Naive thymus-derived CD4-positive, alpha-beta T cell (primary cell): ENCODE measurements at regions of chr5 and their contacts with region 1.

Region 1: DNA sequence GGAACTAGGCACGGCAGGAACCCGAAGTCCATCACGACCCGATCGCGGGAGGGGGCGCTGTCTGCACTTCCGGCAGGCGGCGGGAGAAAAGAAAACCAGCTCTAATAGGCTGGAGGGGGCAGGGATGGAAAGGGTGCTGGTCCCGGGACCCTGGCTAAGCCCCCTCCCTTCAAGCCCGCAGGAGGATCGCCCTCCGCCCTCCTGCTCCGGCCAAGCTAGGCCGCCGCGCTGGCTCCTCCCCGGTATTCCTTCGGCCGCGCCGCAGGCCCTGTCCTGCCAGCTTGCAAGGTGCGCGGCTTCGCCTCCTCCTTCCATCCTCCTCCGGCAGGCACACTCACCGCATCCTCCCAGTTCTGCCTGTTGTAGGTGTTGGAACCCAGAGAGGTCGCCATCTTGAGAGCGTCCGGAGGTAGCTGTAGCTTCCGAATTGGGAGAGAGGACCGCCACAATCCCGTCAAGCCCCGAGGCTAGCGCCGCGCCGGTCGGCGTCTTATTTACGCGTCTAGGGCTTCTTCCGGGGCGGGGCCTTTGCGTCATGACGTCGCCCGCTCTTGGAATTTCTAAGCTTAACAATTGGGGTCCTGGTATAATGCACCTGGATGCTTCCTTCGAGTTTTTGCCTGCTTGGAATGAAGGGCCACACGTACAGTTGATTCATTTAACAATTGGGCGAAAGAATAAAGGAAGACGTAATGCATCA is at the start of gene RBM22:
- DNase-seq: peak; percentile 77 to 93 (median 92)
- ATAC-seq: peak; percentile 96
- H3K4me3 ChIP-seq: peak within 1 kb of the TSS; percentile 80
- H3K4me3 Mint-ChIP-seq: no peak within 1 kb of the TSS
- H3K27ac ChIP-seq: peak within 1 kb of the TSS; percentile 96
- H3K27ac Mint-ChIP-seq: no peak within 1 kb of the TSS
- H3K4me1 ChIP-seq: peaks cover 13 to 14% of the 10 kb centered on the region in 2 donors
- H3K4me1 Mint-ChIP-seq: peaks cover 0 to 12% (median 7%) of the 10 kb centered on the region in 7 donors
- H3K27me3 ChIP-seq: no peaks in the 10 kb centered on the region
- H3K27me3 Mint-ChIP-seq: peaks cover 0 to 3% (median 0%) of the 10 kb centered on the region in 5 donors
- total RNA-seq, gene RBM22: 74.2 to 103 (median 93.1) TPM

Region 2: GRCh38 chr5:150000256-150000989 is 700.3 kb before region 1 on chr5 and contains the starts of genes HMGXB3 and TIGD6:
- CTCF ChIA-PET with region 1: no interaction called
- POLR2A ChIA-PET with region 1: no interaction called
- intact Hi-C with region 1: loop called in 1 of 2 experiments (anchors 5 kb)
- DNase-seq: peak; percentile 64 to 87 (median 74)
- ATAC-seq: peak; percentile 83
- H3K4me3 ChIP-seq: peak within 1 kb of the TSS; percentile 76
- H3K4me3 Mint-ChIP-seq: peak within 1 kb of the TSS; percentile 86 to 99 (median 93)
- H3K27ac ChIP-seq: peak within 1 kb of the TSS; percentile 80
- H3K27ac Mint-ChIP-seq: peak within 1 kb of the TSS; percentile 75 to 98 (median 94)
- H3K4me1 ChIP-seq: peaks cover 18 to 23% of the 10 kb centered on the region in 2 donors
- H3K4me1 Mint-ChIP-seq: peaks cover 33 to 55% (median 46%) of the 10 kb centered on the region in 7 donors
- H3K27me3 ChIP-seq: no peaks in the 10 kb centered on the region
- H3K27me3 Mint-ChIP-seq: no peaks in the 10 kb centered on the region
- total RNA-seq, gene HMGXB3: 27.2 to 40.6 (median 34.5) TPM
- total RNA-seq, gene TIGD6: 2.3 to 7.4 (median 2.8) TPM

Region 3: DNA sequence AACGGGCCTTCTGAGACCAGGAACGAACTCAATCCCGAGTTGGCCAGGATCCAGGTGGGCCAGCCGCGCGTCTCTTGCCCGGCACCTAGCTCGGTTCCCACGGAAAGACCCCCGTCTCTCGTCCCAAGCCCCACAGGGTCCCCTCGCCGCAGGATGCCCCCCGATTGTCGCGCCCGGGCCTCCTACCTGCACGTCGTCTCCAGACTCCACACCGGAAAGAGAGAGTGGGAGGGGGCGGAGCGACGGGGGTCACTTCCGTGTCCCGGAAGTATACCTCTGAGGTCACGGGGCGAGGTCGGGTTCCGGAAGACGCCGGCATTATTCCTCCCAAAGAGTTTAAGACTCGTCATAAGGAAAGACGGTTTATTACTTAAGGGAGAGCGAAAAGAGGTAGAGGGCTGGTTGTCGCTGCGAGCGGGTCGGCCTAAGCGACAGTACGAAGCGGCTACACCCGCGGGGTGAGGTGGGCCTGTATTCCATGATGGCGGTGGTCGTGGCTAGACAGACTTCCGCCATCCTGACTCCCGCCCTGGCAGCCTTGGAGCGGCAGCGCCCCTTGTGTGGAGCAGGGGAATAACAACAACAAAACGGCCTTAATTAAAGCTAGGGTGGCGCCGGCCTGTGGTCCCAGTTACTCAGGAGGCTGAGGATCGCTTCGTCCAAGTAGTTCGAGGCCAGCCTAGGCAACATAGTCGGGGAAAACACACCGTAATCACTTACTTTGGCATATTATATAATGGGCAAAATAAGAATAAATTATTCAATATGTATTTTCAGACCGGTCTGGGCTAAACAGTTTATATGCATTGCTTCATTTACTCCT is 251.0 kb before region 1 on chr5 and contains the start of gene RPS14:
- CTCF ChIA-PET with region 1: interaction called, 4 read pairs
- POLR2A ChIA-PET with region 1: interaction called, 18 read pairs
- intact Hi-C with region 1: loop called (anchors 1 kb)
- DNase-seq: peak; percentile 89 to 98 (median 97)
- ATAC-seq: peak; percentile 97
- H3K4me3 ChIP-seq: peak within 1 kb of the TSS; percentile 68
- H3K4me3 Mint-ChIP-seq: peak within 1 kb of the TSS; percentile 89 to 100 (median 96)
- H3K27ac ChIP-seq: peak within 1 kb of the TSS; percentile 100
- H3K27ac Mint-ChIP-seq: peak within 1 kb of the TSS; percentile 97 to 100 (median 100)
- H3K4me1 ChIP-seq: peaks cover 18 to 23% of the 10 kb centered on the region in 2 donors
- H3K4me1 Mint-ChIP-seq: peaks cover 21 to 44% (median 37%) of the 10 kb centered on the region in 7 donors
- H3K27me3 ChIP-seq: no peaks in the 10 kb centered on the region
- H3K27me3 Mint-ChIP-seq: no peaks in the 10 kb centered on the region
- total RNA-seq, gene RPS14: 2,331 to 7,378 (median 6,414) TPM

Region 4: GRCh38 chr5:150656191-150657132 is 44.3 kb before region 1 on chr5:
- CTCF ChIA-PET with region 1: interaction called, 3 read pairs
- POLR2A ChIA-PET with region 1: interaction called, 5 read pairs
- intact Hi-C with region 1: loop called (anchors 1 to 2 kb)
- DNase-seq: peak; percentile 74 to 88 (median 83)
- ATAC-seq: peak; percentile 96
- H3K4me3 ChIP-seq: peak overlapping the region; percentile 75
- H3K4me3 Mint-ChIP-seq: peak overlapping the region; percentile 75 to 90 (median 84)
- H3K27ac ChIP-seq: peak overlapping the region; percentile 63
- H3K27ac Mint-ChIP-seq: peak overlapping the region in 7 of 9 donors; percentile 17 to 74 (median 54)
- H3K4me1 ChIP-seq: peaks cover 0 to 4% of the 10 kb centered on the region in 2 donors
- H3K4me1 Mint-ChIP-seq: peaks cover 0 to 12% (median 5%) of the 10 kb centered on the region in 7 donors
- H3K27me3 ChIP-seq: no peaks in the 10 kb centered on the region
- H3K27me3 Mint-ChIP-seq: peaks cover 0 to 19% (median 0%) of the 10 kb centered on the region in 5 donors

Region 5: GRCh38 chr5:150758531-150759333 is 58.0 kb after region 1 on chr5 and contains the start of gene DCTN4:
- CTCF ChIA-PET with region 1: interaction called, 5 read pairs
- POLR2A ChIA-PET with region 1: interaction called, 30 read pairs
- intact Hi-C with region 1: loop called (anchors 1 kb)
- DNase-seq: peak; percentile 84 to 96 (median 94)
- ATAC-seq: peak; percentile 95
- H3K4me3 ChIP-seq: peak within 1 kb of the TSS; percentile 86
- H3K4me3 Mint-ChIP-seq: peak within 1 kb of the TSS in 3 of 10 donors; percentile 23 to 46 (median 36)
- H3K27ac ChIP-seq: peak within 1 kb of the TSS; percentile 96
- H3K27ac Mint-ChIP-seq: peak within 1 kb of the TSS in 1 of 9 donors; percentile 62
- H3K4me1 ChIP-seq: peaks cover 5 to 16% of the 10 kb centered on the region in 2 donors
- H3K4me1 Mint-ChIP-seq: peaks cover 22 to 54% (median 36%) of the 10 kb centered on the region in 7 donors
- H3K27me3 ChIP-seq: no peaks in the 10 kb centered on the region
- H3K27me3 Mint-ChIP-seq: peaks cover 0 to 5% (median 0%) of the 10 kb centered on the region in 5 donors
- total RNA-seq, gene DCTN4: 42.4 to 88.2 (median 46.9) TPM

Region 6: DNA sequence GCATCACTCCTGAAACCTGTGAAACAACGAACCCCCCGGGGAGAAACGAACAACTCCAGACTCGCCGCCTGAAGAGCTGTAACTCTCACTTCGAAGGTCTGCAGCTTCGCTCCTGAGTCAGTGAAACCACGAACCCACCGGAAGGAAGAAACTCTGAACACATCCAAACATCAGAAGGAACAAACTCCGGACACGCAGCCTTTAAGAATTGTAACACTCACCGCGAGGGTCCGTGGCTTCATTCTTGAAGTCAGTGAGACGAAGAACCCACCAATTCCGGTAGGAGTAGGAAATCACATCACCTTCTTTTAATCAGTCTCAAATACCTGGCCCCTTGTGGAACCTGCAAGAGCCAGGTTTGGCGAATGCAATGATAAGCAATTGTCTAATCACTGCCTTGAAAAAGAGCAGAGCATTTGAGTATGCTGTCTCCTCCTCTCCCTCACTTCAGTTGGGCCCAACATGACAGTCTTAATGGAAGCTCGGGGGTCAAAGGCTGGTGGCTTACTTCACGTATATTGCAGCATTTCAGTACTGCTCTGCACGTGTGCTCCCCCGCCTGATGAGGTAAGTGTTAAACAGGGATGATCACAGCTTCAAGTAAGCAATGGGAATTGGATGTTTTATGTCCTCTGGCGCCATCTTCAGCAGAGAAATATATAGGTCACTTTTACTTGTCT is 146.1 kb after region 1 on chr5:
- CTCF ChIA-PET with region 1: interaction called, 14 read pairs
- POLR2A ChIA-PET with region 1: interaction called, 11 read pairs
- intact Hi-C with region 1: loop called (anchors 1 kb)
- DNase-seq: peak; percentile 17 to 83 (median 77)
- ATAC-seq: peak; percentile 98
- H3K4me3 ChIP-seq: peak overlapping the region; percentile 38
- H3K4me3 Mint-ChIP-seq: peak overlapping the region; percentile 65 to 93 (median 88)
- H3K27ac ChIP-seq: peak overlapping the region; percentile 52
- H3K27ac Mint-ChIP-seq: peak overlapping the region; percentile 65 to 94 (median 88)
- H3K4me1 ChIP-seq: no peaks in the 10 kb centered on the region
- H3K4me1 Mint-ChIP-seq: peaks cover 6 to 30% (median 19%) of the 10 kb centered on the region in 7 donors
- H3K27me3 ChIP-seq: no peaks in the 10 kb centered on the region
- H3K27me3 Mint-ChIP-seq: peaks cover 0 to 5% (median 0%) of the 10 kb centered on the region in 5 donors